Tibial artery (tissue), 4 donors: ENCODE measurements at regions of chr7 and their contacts with region 1.

Region 1: GRCh38 chr7:26365077-26365900 is 73.6 kb downstream of the SNX10 start:
- DNase-seq: no peak
- H3K4me3 ChIP-seq: no peak overlapping the region
- H3K27ac ChIP-seq: no peak overlapping the region
- H3K4me1 ChIP-seq: no peaks in the 10 kb centered on the region
- H3K27me3 ChIP-seq: peaks cover 0 to 57% of the 10 kb centered on the region in 2 donors
- CTCF ChIP-seq: peak; percentile 65 to 78

Region 2: DNA sequence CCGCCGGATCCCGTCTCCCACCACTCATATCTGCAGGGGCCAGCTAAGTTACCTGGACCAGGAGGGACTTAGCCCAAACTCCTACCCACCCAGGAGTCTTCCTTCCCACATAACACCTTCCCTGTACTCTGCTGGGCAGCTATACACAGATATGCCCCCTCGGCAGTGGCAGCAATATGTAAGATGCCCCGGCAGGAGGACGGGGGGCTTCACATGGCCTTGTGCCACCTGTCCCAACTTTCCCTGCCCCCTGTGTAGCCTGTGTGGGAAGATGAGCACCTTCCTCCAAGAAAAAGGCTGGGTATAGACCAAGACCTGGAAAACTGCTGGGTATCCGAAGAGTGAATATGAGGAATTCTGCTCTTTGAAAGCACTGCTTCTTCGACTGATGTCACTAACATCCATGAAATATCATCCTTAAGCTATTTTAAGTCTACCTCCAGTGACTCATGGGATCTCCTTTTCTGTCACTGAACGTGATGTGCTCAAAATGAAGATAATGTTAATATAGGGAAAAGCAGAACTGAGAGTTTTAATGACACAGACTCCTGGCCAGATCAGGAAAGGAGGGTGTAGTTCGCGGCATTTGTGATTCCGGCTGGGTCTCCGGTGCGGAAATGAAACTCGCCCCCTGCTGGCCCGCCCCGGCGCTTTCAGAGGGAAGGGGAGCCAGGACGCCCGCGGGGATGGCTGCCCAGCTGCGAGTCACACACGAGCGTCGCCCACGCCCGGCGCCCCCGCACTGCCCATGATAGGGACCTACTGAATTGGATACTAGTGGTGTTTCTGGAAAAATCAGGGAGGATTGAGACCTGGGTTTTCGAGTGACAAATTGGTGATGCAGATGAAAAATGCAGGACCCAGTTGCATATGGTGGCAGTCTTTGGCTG is 470.1 kb before region 1 on chr7:
- intact Hi-C with region 1: loop called (anchors 5 kb)
- DNase-seq: peak; percentile 63 to 79
- H3K4me3 ChIP-seq: peak overlapping the region in 1 of 2 donors; percentile 35
- H3K27ac ChIP-seq: no peak overlapping the region
- H3K4me1 ChIP-seq: peaks cover 0 to 14% (median 8%) of the 10 kb centered on the region in 4 donors
- H3K27me3 ChIP-seq: peaks cover 0 to 37% of the 10 kb centered on the region in 2 donors
- CTCF ChIP-seq: peak; percentile 50 to 57

Region 3: GRCh38 chr7:26061688-26062150 is 303.6 kb before region 1 on chr7:
- intact Hi-C with region 1: loop called (anchors 10 kb)
- DNase-seq: peak in 1 of 2 donors; percentile 59
- H3K4me3 ChIP-seq: no peak overlapping the region
- H3K27ac ChIP-seq: no peak overlapping the region
- H3K4me1 ChIP-seq: no peaks in the 10 kb centered on the region
- H3K27me3 ChIP-seq: peaks cover 0 to 4% of the 10 kb centered on the region in 2 donors
- CTCF ChIP-seq: peak; percentile 57 to 71

Region 4: DNA sequence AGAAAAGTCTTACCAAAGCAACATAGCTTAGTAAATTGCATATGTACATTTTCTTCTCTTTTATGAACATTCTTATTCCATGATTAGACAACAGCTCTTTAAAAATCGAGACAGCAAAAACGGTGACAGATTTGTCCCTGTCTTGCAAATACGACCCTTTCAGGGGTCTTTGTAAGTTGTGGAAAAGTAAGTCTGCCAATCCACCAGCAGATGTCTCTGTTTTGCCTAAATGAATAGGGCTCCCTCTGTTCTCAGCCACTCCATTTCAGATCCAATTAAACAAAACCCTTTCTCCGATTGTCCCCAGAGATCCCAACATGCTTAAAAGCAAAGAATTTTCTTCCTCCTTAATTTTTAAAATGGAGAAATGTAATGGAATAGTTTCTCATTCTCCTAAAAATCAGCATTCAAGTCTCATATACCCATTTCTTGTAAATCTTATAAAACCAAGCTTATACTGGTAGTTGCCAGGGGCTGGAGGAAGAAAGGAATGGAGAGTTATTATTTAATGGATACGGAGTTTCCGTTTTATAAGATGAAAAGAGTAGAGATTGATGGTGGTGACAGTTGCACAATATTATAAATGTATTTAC is 274.3 kb before region 1 on chr7:
- intact Hi-C with region 1: loop called (anchors 5 kb)
- DNase-seq: no peak
- H3K4me3 ChIP-seq: no peak overlapping the region
- H3K27ac ChIP-seq: no peak overlapping the region
- H3K4me1 ChIP-seq: no peaks in the 10 kb centered on the region
- H3K27me3 ChIP-seq: no peaks in the 10 kb centered on the region
- CTCF ChIP-seq: peak; percentile 42 to 55

Region 5: DNA sequence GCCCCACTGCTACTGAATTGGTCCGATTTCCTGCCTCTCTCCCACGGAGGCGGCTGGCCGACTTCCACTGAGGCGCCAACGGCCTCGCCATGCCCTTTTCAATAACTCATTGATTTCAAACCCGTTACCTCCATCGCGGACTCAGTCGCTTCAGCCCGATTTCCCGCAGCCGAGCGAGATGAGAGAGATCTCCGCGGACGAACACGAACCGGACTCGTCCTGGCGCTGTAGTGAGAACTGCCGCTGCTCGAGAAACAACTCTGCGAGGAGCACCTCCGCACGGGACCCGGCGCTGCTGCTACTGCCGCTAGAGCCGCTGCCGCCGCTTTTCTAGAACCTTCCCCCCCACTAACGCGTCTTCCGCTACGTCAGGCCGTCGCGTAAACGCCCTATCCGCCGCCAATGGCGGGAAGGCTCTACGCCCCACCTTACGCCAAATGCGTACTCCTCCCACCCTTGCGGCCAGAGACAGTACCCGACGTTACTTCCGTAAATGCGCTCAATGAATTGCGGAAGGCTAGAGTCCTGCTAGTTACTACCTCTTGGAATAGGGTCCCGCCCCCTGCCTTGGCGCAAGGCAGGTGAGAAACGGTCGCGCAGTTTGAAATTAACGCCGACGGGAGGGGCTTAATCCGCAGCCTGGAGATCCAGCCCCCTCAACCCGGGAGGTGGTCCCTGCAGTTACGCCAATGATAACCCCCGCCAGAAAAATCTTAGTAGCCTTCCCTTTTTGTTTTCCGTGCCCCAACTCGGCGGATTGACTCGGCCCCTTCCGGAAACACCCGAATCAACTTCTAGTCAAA is 164.6 kb before region 1 on chr7 and contains the start of gene HNRNPA2B1:
- intact Hi-C with region 1: loop called (anchors 5 kb)
- DNase-seq: peak; percentile 98
- H3K4me3 ChIP-seq: peak within 1 kb of the TSS; percentile 74 to 91
- H3K27ac ChIP-seq: peak within 1 kb of the TSS; percentile 99
- H3K4me1 ChIP-seq: peaks cover 0 to 50% (median 34%) of the 10 kb centered on the region in 4 donors
- H3K27me3 ChIP-seq: no peaks in the 10 kb centered on the region
- CTCF ChIP-seq: peak in 1 of 2 experiments; percentile 31

Region 6: GRCh38 chr7:26667500-26668133 is 302.3 kb after region 1 on chr7:
- intact Hi-C with region 1: loop called (anchors 5 kb)
- DNase-seq: peak in 1 of 2 donors; percentile 59
- H3K4me3 ChIP-seq: no peak overlapping the region
- H3K27ac ChIP-seq: no peak overlapping the region
- H3K4me1 ChIP-seq: no peaks in the 10 kb centered on the region
- H3K27me3 ChIP-seq: no peaks in the 10 kb centered on the region
- CTCF ChIP-seq: peak; percentile 62 to 64

Region 7: GRCh38 chr7:27160546-27161213 is 795.4 kb after region 1 on chr7:
- intact Hi-C with region 1: loop called (anchors 2 kb)
- DNase-seq: peak; percentile 90
- H3K4me3 ChIP-seq: peak overlapping the region; percentile 68 to 91
- H3K27ac ChIP-seq: peak overlapping the region; percentile 82 to 96
- H3K4me1 ChIP-seq: peaks cover 0 to 43% (median 17%) of the 10 kb centered on the region in 4 donors
- H3K27me3 ChIP-seq: no peaks in the 10 kb centered on the region
- CTCF ChIP-seq: peak; percentile 98 to 99